ENCODE measurements at regions of chr20 and their contacts with region 1.

Region 1: GRCh38 chr20:49484180-49485140 is 2.0 kb upstream of the KCNB1 start:
- DNase-seq: peak; percentile 57 to 92
- H3K4me3 ChIP-seq: peak overlapping the region; percentile 41 to 72 (median 60)
- H3K27ac ChIP-seq: no peak overlapping the region
- H3K4me1 ChIP-seq: peaks cover 0 to 5% (median under 1%) of the 10 kb centered on the region in 4 experiments; a peak in 2 of 7 replicates
- H3K27me3 ChIP-seq: peaks cover 0 to 12% (median 9%) of the 10 kb centered on the region in 4 experiments; a peak in 5 of 7 replicates
- CTCF ChIP-seq: peak; percentile 67 to 97 (median 83)
- EP300 ChIP-seq: peak in 1 of 2 experiments; percentile 39; a peak in 1 of 3 replicates
- POLR2A ChIP-seq: no peak
- RAD21 ChIP-seq: peak; percentile 83 to 89

Region 2: DNA sequence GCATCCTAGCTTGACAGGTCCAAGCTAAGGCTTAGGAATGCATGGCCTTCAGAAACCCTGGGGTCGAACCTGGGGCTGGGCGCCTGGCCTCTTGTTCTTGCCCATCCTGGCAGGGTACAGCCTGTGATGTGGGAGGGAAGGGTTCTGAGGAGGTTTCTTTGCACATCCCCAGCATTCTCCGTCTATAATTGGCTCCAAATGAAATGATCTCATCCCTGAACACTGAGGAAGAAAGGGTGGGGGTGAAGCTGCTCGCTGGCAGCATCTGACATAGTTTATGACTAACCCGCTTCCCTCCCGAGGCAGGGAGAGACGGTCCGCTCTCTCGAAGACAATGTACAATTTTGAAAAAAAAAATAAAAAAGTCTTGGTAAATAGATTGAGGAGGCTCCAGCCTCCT is 139.5 kb before region 1 on chr20:
- CTCF ChIA-PET with region 1: interaction called, 126 read pairs
- POLR2A ChIA-PET with region 1: interaction called, 3 read pairs
- DNase-seq: no peak
- H3K4me3 ChIP-seq: no peak overlapping the region
- H3K27ac ChIP-seq: no peak overlapping the region
- H3K4me1 ChIP-seq: no peaks in the 10 kb centered on the region
- H3K27me3 ChIP-seq: no peaks in the 10 kb centered on the region
- CTCF ChIP-seq: no peak
- EP300 ChIP-seq: no peak
- POLR2A ChIP-seq: no peak
- RAD21 ChIP-seq: no peak

Region 3: DNA sequence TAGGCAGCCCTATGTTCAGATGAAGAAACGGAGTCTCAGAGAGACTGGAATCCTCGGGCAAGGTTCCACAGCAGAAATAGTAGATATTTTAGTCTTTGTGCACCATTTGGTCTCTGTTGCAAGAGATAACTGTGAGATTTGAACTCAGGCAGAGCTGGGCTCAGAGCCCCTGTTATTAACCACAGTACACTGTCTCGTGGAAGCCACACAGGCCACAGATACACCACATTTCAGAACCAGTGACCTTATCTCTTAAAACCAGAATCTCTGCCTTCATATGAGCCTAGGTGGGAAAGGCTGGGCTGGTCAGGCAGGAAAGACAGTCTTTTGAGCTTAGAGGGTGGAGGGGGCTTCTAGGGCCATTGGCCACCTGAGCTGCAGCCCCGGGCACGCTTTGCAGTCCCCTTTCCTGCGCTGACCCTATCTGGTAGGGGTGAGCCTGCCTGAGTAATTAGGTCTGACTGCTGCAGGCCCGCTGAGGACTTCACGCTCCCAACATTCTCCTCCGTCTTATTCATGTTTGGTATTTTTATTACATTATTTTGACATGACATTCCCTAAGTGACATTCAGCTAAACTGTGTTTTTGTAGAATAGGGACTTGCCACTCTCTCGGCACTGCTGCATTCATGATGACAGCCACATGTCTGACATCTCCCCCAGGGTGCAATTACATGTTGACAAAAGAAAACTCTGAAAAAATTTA is 73.1 kb before region 1 on chr20:
- CTCF ChIA-PET with region 1: interaction called, 14 read pairs
- POLR2A ChIA-PET with region 1: no interaction called
- DNase-seq: no peak
- H3K4me3 ChIP-seq: no peak overlapping the region
- H3K27ac ChIP-seq: no peak overlapping the region
- H3K4me1 ChIP-seq: no peaks in the 10 kb centered on the region
- H3K27me3 ChIP-seq: no peaks in the 10 kb centered on the region
- CTCF ChIP-seq: no peak
- EP300 ChIP-seq: no peak
- POLR2A ChIP-seq: no peak
- RAD21 ChIP-seq: no peak

Region 4: GRCh38 chr20:49446808-49447207 is 37.7 kb before region 1 on chr20:
- CTCF ChIA-PET with region 1: interaction called, 18 read pairs
- POLR2A ChIA-PET with region 1: interaction called, 4 read pairs
- DNase-seq: peak in 1 of 2 experiments; percentile 65
- H3K4me3 ChIP-seq: no peak overlapping the region
- H3K27ac ChIP-seq: no peak overlapping the region
- H3K4me1 ChIP-seq: peaks cover 14 to 29% (median 17%) of the 10 kb centered on the region in 4 experiments
- H3K27me3 ChIP-seq: no peaks in the 10 kb centered on the region; a peak in 1 of 7 replicates
- CTCF ChIP-seq: no peak
- EP300 ChIP-seq: no peak
- POLR2A ChIP-seq: no peak
- RAD21 ChIP-seq: peak in 1 of 2 experiments; percentile 43; a peak in 3 of 4 replicates

Region 5: GRCh38 chr20:49496553-49497397 is 12.3 kb after region 1 on chr20:
- CTCF ChIA-PET with region 1: interaction called, 47 read pairs
- POLR2A ChIA-PET with region 1: interaction called, 3 read pairs
- DNase-seq: no peak
- H3K4me3 ChIP-seq: no peak overlapping the region
- H3K27ac ChIP-seq: no peak overlapping the region
- H3K4me1 ChIP-seq: no peaks in the 10 kb centered on the region; a peak in 1 of 7 replicates
- H3K27me3 ChIP-seq: no peaks in the 10 kb centered on the region
- CTCF ChIP-seq: no peak
- EP300 ChIP-seq: no peak
- POLR2A ChIP-seq: no peak
- RAD21 ChIP-seq: no peak

Region 6: GRCh38 chr20:49519777-49520359 is 35.4 kb after region 1 on chr20:
- CTCF ChIA-PET with region 1: interaction called, 10 read pairs
- POLR2A ChIA-PET with region 1: no interaction called
- DNase-seq: no peak
- H3K4me3 ChIP-seq: no peak overlapping the region
- H3K27ac ChIP-seq: no peak overlapping the region
- H3K4me1 ChIP-seq: no peaks in the 10 kb centered on the region; a peak in 1 of 7 replicates
- H3K27me3 ChIP-seq: no peaks in the 10 kb centered on the region
- CTCF ChIP-seq: peak; percentile 20 to 38 (median 24)
- EP300 ChIP-seq: no peak
- POLR2A ChIP-seq: no peak
- RAD21 ChIP-seq: peak; percentile 21 to 33; a peak in 3 of 4 replicates